Spleen (tissue), 13 donors: ENCODE measurements at regions of chr11 and their contacts with region 1.

Region 1: GRCh38 chr11:113289431-113290187 is 24.8 kb upstream of the TTC12 start:
- DNase-seq: peak; percentile 90
- H3K4me3 ChIP-seq: no peak overlapping the region
- H3K27ac ChIP-seq: no peak overlapping the region
- H3K4me1 ChIP-seq: peaks cover 0 to 3% (median 0%) of the 10 kb centered on the region in 6 donors
- H3K27me3 ChIP-seq: peaks cover 0 to 11% (median 0%) of the 10 kb centered on the region in 7 donors
- CTCF ChIP-seq: peak; percentile 66 to 91 (median 83)
- POLR2A ChIP-seq: no peak

Region 2: GRCh38 chr11:112219476-112220232 is 1070.0 kb before region 1 on chr11:
- intact Hi-C with region 1: loop called (anchors 10 kb)
- DNase-seq: peak; percentile 70
- H3K4me3 ChIP-seq: no peak overlapping the region
- H3K27ac ChIP-seq: no peak overlapping the region
- H3K4me1 ChIP-seq: peaks cover 0 to 8% (median 5%) of the 10 kb centered on the region in 6 donors
- H3K27me3 ChIP-seq: no peaks in the 10 kb centered on the region
- CTCF ChIP-seq: peak; percentile 74 to 94 (median 86)
- POLR2A ChIP-seq: no peak

Region 3: GRCh38 chr11:112289588-112290492 is 999.8 kb before region 1 on chr11:
- intact Hi-C with region 1: loop called (anchors 5 kb)
- DNase-seq: peak; percentile 97
- H3K4me3 ChIP-seq: peak overlapping the region; percentile 41 to 68 (median 52)
- H3K27ac ChIP-seq: peak overlapping the region in 7 of 8 donors; percentile 19 to 78 (median 46)
- H3K4me1 ChIP-seq: peaks cover 0 to 32% (median 12%) of the 10 kb centered on the region in 6 donors
- H3K27me3 ChIP-seq: no peaks in the 10 kb centered on the region
- CTCF ChIP-seq: peak; percentile 44 to 94 (median 81)
- POLR2A ChIP-seq: no peak

Region 4: DNA sequence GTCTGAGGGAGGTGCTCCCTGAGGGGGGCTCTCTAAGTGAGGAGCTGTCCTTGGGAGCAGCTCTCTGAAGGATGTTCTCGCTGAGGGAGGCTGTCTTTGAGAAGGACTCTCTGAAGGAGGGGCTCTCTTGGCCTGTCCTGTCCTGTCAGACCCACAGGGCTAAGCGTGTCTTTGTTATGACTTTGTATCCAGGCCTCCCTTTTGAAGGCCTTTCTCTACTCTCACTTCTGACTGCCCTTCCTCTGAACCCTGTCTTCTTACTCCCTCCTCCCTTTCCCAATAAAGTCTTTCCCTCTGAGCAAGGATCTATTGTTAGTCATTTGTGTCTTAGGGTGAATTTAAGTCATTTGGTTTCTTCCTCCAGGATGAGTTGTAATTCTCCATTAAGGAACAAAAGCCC is 698.8 kb before region 1 on chr11:
- intact Hi-C with region 1: loop called (anchors 2 kb)
- DNase-seq: no peak
- H3K4me3 ChIP-seq: no peak overlapping the region
- H3K27ac ChIP-seq: peak overlapping the region in 1 of 8 donors; percentile 4
- H3K4me1 ChIP-seq: peaks cover 0 to 5% (median 2%) of the 10 kb centered on the region in 6 donors
- H3K27me3 ChIP-seq: no peaks in the 10 kb centered on the region
- CTCF ChIP-seq: no peak
- POLR2A ChIP-seq: no peak